ENCODE measurements at regions of chr14 and their contacts with region 1.

Region 1: GRCh38 chr14:23301288-23301968 is 1.2 kb downstream of the PPP1R3E start:
- DNase-seq: peak; percentile 90
- H3K4me3 ChIP-seq: peak overlapping the region; percentile 49
- H3K27me3 ChIP-seq: no peaks in the 10 kb centered on the region
- CTCF ChIP-seq: peak; percentile 65

Region 2: DNA sequence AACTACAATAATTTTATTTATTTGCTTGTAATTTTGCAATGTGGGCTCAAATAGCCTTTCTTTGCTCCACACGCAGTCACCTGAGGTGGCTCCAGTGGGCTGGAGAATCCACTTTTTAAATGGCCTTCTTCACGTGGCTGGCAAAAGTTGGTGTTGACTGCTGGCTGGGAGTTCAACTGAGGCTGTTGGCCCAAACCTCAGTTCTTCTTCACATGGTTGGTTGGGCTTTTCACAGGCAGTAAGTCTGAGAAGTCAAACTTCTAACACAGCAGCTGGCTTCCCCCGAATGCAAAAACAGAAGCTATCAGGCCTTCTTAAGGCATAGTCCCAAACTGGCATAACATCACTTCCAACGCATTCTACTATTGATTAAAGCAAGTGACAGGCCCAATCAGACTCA is 537.0 kb before region 1 on chr14:
- CTCF ChIA-PET with region 1: no interaction called
- POLR2A ChIA-PET with region 1: no interaction called
- DNase-seq: no peak
- H3K4me3 ChIP-seq: no peak overlapping the region
- H3K27me3 ChIP-seq: no peaks in the 10 kb centered on the region
- CTCF ChIP-seq: no peak

Region 3: DNA sequence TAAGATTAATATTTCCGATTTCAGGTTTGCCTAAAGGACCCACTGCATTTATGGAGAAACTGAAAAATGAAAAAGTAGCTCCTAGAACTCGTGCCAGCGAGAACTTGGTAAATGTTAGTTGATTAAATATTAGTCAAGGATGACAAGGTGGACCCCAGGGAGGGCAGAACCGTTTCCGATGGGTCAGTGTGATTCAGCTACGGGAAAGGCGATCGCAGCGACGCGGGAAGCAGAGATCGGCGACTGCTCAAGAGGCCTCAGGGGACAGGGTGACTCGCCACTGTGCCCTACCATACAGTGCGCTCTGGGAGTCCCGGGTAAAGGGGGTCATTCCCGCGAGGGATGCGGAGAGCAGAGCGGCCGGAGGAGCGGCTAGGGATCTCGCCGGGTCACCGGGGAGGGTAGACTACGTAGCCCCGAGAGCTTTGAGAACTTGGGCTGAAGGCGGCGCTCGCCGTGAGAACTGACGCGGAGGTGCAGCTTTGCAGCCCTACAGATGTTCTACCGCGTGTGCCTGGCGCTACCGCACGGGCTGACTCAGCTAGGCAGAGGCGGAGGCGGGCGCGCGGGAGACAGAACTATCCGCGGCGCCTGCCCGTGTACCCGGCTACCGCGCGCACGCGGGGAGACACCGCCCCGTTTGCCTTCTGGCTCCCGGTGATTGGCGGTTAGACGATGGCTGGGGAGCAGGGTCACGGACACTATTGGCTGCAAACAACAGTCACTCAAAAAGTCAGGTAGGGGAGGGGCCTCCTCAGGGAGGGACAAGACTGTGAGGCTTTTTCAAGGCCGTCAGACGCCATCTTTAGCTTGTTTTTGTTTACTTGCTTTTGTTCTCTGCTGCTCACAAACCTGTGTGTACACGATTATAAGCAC is 294.6 kb before region 1 on chr14:
- CTCF ChIA-PET with region 1: no interaction called
- POLR2A ChIA-PET with region 1: interaction called, 14 read pairs
- DNase-seq: peak; percentile 87
- H3K4me3 ChIP-seq: peak overlapping the region; percentile 75
- H3K27me3 ChIP-seq: no peaks in the 10 kb centered on the region
- CTCF ChIP-seq: peak; percentile 51

Region 4: GRCh38 chr14:23286020-23286905 is 15.2 kb before region 1 on chr14 and contains the start of gene HOMEZ:
- CTCF ChIA-PET with region 1: interaction called, 13 read pairs
- POLR2A ChIA-PET with region 1: interaction called, 3 read pairs
- DNase-seq: peak; percentile 90
- H3K4me3 ChIP-seq: peak within 1 kb of the TSS; percentile 92
- H3K27me3 ChIP-seq: peaks cover 2% of the 10 kb centered on the region
- CTCF ChIP-seq: peak; percentile 14; the same call in 1 of the 2 replicates
- polyA plus RNA-seq, gene HOMEZ: 11.9 and 16.0 TPM in 2 replicates

Region 5: GRCh38 chr14:23735394-23735793 is 434.0 kb after region 1 on chr14:
- CTCF ChIA-PET with region 1: no interaction called
- POLR2A ChIA-PET with region 1: no interaction called
- DNase-seq: no peak
- H3K4me3 ChIP-seq: no peak overlapping the region
- H3K27me3 ChIP-seq: peaks cover 1% of the 10 kb centered on the region; the same call in 1 of the 2 replicates
- CTCF ChIP-seq: no peak